MCF 10A (cell line): ENCODE measurements at regions of chr13 and their contacts with region 1.

Region 1: DNA sequence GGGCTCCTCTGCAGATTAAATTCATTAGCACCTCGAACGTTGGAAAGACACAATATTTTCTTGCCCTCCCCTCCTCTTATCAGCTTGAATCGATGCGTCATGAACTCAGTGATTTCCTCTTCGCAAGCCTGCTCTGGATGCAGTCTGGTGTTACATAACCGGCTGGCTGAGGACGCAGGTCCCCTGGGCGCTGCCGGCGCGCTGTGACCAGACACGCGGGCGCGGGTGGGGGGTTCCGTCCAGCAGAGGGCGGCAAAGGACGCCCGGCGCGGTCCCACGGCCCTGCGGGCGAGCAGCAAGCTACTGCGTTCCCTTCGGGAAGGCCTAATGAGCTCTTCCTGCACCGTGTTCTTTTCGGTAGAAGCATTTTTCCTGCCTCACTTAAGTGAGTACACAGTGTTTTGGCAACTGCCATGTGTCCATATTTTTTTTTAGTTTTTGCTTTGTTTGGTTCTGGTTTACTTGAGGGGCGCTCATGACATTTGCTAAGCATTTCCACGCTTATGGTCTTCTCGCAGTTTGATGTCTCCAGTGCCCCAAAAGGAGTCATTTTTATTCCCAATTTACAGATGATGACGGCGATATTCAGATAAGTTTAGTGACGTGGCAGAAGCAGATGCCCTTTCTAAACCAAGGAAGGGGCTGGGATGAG is 112.2 kb upstream of the MBNL2 start:
- DNase-seq: peak; percentile 88
- H3K4me3 Mint-ChIP-seq: no peak overlapping the region
- H3K27ac Mint-ChIP-seq: no peak overlapping the region
- H3K4me1 Mint-ChIP-seq: peaks cover 6% of the 10 kb centered on the region
- H3K27me3 Mint-ChIP-seq: peaks cover 19% of the 10 kb centered on the region
- CTCF ChIP-seq: peak; percentile 99

Region 2: GRCh38 chr13:97091196-97091595 is 18.8 kb before region 1 on chr13:
- CTCF ChIA-PET with region 1: interaction called, 11 read pairs
- POLR2A ChIA-PET with region 1: no interaction called
- intact Hi-C with region 1: no loop called
- DNase-seq: no peak
- H3K4me3 Mint-ChIP-seq: no peak overlapping the region
- H3K27ac Mint-ChIP-seq: no peak overlapping the region
- H3K4me1 Mint-ChIP-seq: no peaks in the 10 kb centered on the region
- H3K27me3 Mint-ChIP-seq: no peaks in the 10 kb centered on the region
- CTCF ChIP-seq: no peak

Region 3: DNA sequence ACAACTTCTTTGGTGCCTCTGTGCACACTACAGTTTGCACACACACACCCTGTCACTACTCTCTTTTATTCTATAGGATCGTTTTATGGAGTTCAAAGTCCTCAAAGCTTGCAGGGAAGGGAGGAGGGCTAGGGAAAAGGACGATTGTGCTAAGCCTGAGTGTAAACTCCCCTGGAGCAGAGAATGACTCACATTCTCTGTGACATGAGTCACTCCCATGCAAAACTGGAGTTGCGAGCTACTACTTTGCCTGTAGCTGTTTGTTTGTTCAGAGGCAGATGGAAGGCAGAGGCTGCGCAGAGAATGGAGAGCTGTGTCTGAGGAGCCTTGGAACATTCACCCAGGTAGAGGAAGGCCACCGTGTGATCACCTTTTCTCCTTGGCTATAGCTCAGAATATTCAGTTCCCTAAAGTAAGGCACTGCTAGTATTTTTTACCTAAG is 31.6 kb after region 1 on chr13:
- CTCF ChIA-PET with region 1: interaction called, 106 read pairs
- POLR2A ChIA-PET with region 1: interaction called, 10 read pairs
- intact Hi-C with region 1: no loop called
- DNase-seq: peak; percentile 96
- H3K4me3 Mint-ChIP-seq: no peak overlapping the region
- H3K27ac Mint-ChIP-seq: peak overlapping the region; percentile 18
- H3K4me1 Mint-ChIP-seq: peaks cover 8% of the 10 kb centered on the region
- H3K27me3 Mint-ChIP-seq: peaks cover under 1% of the 10 kb centered on the region
- CTCF ChIP-seq: no peak

Region 4: DNA sequence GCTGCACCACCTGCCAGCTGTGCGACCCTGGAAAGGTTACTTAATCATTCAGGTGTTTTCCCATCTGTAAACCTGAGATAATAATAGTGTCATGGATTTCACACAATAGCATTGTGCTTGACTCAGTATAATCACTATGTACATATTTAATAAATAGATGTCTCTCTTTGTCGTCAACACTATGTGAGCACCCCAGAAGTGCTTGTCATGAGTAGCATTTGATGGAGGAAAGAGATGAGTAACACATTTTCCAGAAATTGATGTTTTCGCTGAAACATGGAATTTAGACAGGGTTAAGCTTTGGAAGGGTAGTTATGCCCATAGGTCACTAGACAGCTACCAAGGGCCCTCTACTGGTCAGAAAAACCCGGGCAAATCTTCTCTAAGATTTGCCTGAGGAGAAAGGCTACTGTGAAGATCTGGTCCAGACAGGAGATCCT is 102.7 kb after region 1 on chr13:
- CTCF ChIA-PET with region 1: interaction called, 478 read pairs
- POLR2A ChIA-PET with region 1: interaction called, 23 read pairs
- intact Hi-C with region 1: loop called (anchors 1 kb)
- DNase-seq: peak; percentile 75
- H3K4me3 Mint-ChIP-seq: no peak overlapping the region
- H3K27ac Mint-ChIP-seq: no peak overlapping the region
- H3K4me1 Mint-ChIP-seq: no peaks in the 10 kb centered on the region
- H3K27me3 Mint-ChIP-seq: no peaks in the 10 kb centered on the region
- CTCF ChIP-seq: peak; percentile 69

Region 5: GRCh38 chr13:97353927-97354675 is 244.1 kb after region 1 on chr13:
- CTCF ChIA-PET with region 1: interaction called, 113 read pairs
- POLR2A ChIA-PET with region 1: interaction called, 6 read pairs
- intact Hi-C with region 1: loop called (anchors 1 kb)
- DNase-seq: no peak
- H3K4me3 Mint-ChIP-seq: no peak overlapping the region
- H3K27ac Mint-ChIP-seq: no peak overlapping the region
- H3K4me1 Mint-ChIP-seq: peaks cover 4% of the 10 kb centered on the region
- H3K27me3 Mint-ChIP-seq: no peaks in the 10 kb centered on the region
- CTCF ChIP-seq: no peak